PC-9 (cell line): ENCODE measurements at regions of chr9 and their contacts with region 1.

Region 1: DNA sequence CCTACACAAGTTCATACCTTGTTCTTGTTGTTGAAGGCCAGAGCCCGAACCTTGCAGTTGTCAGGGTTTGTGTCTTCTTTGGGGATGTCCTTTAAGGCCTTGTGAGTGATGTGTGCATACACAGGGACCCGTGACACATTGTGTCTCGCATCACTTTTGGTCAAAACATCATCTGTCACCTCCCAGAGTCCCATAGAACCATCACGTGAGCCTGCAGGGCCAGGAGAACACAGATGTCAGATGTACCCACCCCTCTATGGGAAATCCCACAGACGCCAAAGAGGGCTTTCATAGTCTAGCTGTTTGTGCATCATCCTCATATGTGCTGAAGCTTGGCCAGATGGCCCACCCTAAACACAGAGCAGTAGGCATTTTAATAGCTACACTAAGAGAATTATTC is 28.2 kb downstream of the DCAF12 start:
- DNase-seq: no peak
- H3K4me3 ChIP-seq: no peak overlapping the region
- H3K27ac ChIP-seq: no peak overlapping the region
- H3K4me1 ChIP-seq: no peaks in the 10 kb centered on the region
- H3K27me3 ChIP-seq: no peaks in the 10 kb centered on the region
- CTCF ChIP-seq: no peak

Region 2: GRCh38 chr9:34048923-34049697 is 49.2 kb before region 1 on chr9:
- CTCF ChIA-PET with region 1: interaction called, 15 read pairs
- POLR2A ChIA-PET with region 1: no interaction called
- intact Hi-C with region 1: no loop called
- DNase-seq: peak; percentile 81 to 89
- H3K4me3 ChIP-seq: peak overlapping the region; percentile 69
- H3K27ac ChIP-seq: peak overlapping the region; percentile 90
- H3K4me1 ChIP-seq: peaks cover 20% of the 10 kb centered on the region
- H3K27me3 ChIP-seq: no peaks in the 10 kb centered on the region
- CTCF ChIP-seq: no peak